Mammary epithelial cell (primary cell): ENCODE measurements at regions of chr3 and their contacts with region 1.

Region 1: DNA sequence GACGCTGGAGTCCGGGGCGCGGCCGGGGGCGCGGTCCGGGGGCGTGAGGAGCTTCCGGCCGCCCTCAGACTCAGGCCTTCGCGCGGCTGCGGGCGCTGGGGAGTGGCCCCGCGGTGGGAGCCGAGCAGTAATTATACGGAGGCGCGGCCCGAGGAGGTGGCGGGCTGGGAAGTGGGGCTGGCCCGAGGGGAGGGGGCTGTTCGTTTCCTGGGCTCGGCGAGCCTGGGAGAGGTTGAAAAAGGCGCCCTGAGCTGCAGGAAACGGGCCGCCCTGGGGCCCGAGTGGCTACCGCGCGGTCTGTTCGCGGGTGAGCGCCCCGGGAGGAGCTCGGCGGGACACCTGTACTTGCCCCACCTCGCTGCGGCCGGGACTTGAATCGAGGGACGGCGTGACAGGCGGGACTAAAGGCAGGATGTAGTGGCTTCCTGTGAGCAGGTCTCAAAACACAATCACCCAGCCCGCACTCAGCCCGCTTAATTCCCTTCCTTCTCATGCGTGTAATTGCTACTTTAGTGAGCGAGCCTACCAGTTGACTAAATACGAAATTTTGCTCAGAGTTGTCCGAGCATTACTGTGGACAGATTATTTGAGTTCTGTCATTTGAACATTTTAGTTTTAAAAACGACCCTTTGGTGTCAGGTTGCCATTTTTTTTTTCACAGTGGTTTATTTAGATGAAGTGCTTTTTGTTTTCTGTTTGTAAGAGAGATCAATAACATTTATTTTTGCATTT is 860 bp downstream of the RASA2 start:
- DNase-seq: peak; percentile 68
- H3K4me3 ChIP-seq: peak overlapping the region; percentile 71 to 85 (median 83)
- H3K27ac ChIP-seq: peak overlapping the region; percentile 75
- H3K4me1 ChIP-seq: peaks cover 29% of the 10 kb centered on the region
- H3K27me3 ChIP-seq: no peaks in the 10 kb centered on the region
- CTCF ChIP-seq: peak in 1 of 2 donors; percentile 0

Region 2: GRCh38 chr3:141530133-141530768 is 42.6 kb after region 1 on chr3:
- CTCF ChIA-PET with region 1: no interaction called
- dilution Hi-C with region 1: no loop called
- in situ Hi-C with region 1: no loop called
- intact Hi-C with region 1: loop called (anchors 5 kb)
- DNase-seq: peak; percentile 75
- H3K4me3 ChIP-seq: peak overlapping the region in 2 of 3 experiments; percentile 16 to 54
- H3K27ac ChIP-seq: peak overlapping the region; percentile 64
- H3K4me1 ChIP-seq: peaks cover 34% of the 10 kb centered on the region
- H3K27me3 ChIP-seq: no peaks in the 10 kb centered on the region
- CTCF ChIP-seq: no peak